Breast epithelium (tissue), 4 donors: ENCODE measurements at regions of chr5 and their contacts with region 1.

Region 1: GRCh38 chr5:100275631-100276030 is 259.5 kb upstream of the FAM174A start:
- DNase-seq: no peak
- H3K4me3 ChIP-seq: no peak overlapping the region
- H3K27ac ChIP-seq: no peak overlapping the region
- H3K4me1 ChIP-seq: no peaks in the 10 kb centered on the region
- H3K27me3 ChIP-seq: no peaks in the 10 kb centered on the region
- CTCF ChIP-seq: no peak
- POLR2A ChIP-seq: no peak

Region 2: DNA sequence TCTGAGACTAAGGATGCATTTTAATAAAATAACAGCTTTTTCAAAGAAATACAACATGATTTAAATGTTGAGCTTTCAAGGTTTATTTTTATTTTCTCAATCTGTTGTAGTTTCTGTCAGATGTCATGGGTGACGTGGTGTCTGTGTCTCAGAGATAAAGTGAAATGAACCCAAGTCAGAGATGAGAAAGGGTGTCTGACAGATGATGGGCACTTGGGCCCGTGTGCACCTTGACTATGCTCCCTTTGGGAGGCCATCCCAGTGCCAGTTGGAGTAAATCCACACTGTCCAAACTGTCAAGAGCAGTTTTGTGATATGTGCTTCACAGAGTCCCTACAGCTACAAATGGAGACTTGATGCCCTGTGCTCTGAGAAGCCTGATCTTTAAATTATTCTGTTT is 277.3 kb before region 1 on chr5:
- intact Hi-C with region 1: loop called (anchors 5 kb)
- DNase-seq: no peak
- H3K4me3 ChIP-seq: no peak overlapping the region
- H3K27ac ChIP-seq: no peak overlapping the region
- H3K4me1 ChIP-seq: no peaks in the 10 kb centered on the region
- H3K27me3 ChIP-seq: no peaks in the 10 kb centered on the region
- CTCF ChIP-seq: no peak
- POLR2A ChIP-seq: no peak